AG04449 (cell line): ENCODE measurements at regions of chr10 and their contacts with region 1.

Region 1: GRCh38 chr10:123994417-123995081 is 98.8 kb downstream of the CHST15 start:
- DNase-seq: peak; percentile 59
- H3K4me3 ChIP-seq: peak overlapping the region; percentile 44
- CTCF ChIP-seq: peak; percentile 99

Region 2: GRCh38 chr10:123967396-123968243 is 26.9 kb before region 1 on chr10:
- CTCF ChIA-PET with region 1: interaction called, 21 read pairs
- POLR2A ChIA-PET with region 1: no interaction called
- DNase-seq: no peak
- H3K4me3 ChIP-seq: no peak overlapping the region
- CTCF ChIP-seq: peak; percentile 91

Region 3: GRCh38 chr10:124032971-124033886 is 38.7 kb after region 1 on chr10:
- CTCF ChIA-PET with region 1: no interaction called
- POLR2A ChIA-PET with region 1: no interaction called
- DNase-seq: peak; percentile 9
- H3K4me3 ChIP-seq: no peak overlapping the region
- CTCF ChIP-seq: no peak

Region 4: GRCh38 chr10:124354411-124355382 is 360.1 kb after region 1 on chr10:
- CTCF ChIA-PET with region 1: interaction called, 13 read pairs
- POLR2A ChIA-PET with region 1: no interaction called
- DNase-seq: no peak
- H3K4me3 ChIP-seq: peak overlapping the region; percentile 49
- CTCF ChIP-seq: no peak

Region 5: DNA sequence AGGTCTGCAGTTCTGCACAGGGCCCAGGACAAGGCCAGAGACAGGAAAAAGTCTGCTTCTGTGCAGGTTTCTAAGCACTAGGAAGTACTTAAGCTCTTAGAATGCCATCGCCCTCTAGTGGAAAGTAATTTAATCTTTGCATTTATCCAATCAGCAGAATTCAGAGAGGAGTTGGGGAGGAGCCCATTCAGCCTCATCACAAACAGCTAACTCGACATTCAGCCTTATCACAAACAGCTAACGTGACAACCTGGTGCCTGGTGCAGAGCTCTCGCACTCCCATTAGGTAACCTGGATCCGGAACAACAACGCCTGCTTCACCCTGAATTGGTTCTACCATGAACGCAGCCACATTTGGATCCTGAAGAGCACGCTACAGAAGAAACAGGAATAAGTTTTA is 409.0 kb after region 1 on chr10:
- CTCF ChIA-PET with region 1: interaction called, 80 read pairs
- POLR2A ChIA-PET with region 1: no interaction called
- DNase-seq: peak; percentile 36
- H3K4me3 ChIP-seq: no peak overlapping the region
- CTCF ChIP-seq: peak; percentile 50

Region 6: GRCh38 chr10:124418726-124419501 is 424.4 kb after region 1 on chr10 and contains the start of gene OAT:
- CTCF ChIA-PET with region 1: interaction called, 14 read pairs
- POLR2A ChIA-PET with region 1: interaction called, 3 read pairs
- DNase-seq: peak; percentile 65
- H3K4me3 ChIP-seq: peak within 1 kb of the TSS; percentile 76
- CTCF ChIP-seq: peak; percentile 40